GM10248 (cell line): ENCODE measurements at regions of chr4 and their contacts with region 1.

Region 1: DNA sequence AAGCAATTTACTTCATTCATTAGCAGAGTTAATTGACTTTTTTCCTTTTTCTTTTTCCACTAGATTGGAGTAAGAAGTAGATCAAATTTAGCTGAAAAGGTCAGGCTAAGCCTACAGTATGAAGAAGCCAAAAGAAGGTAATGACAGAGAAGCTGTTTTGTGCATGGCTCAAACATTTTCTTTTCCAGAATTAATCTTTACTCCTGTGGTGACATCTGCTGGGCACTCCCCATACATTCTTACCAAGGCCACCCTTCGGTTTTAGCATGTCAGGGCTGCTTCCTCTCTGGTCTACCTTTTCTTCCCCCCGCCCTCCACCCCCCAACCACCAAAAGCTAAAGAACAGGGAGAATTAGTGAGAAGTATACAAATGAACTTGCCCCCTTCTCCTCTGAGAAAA is 70.2 kb downstream of the CLDN22 start:
- DNase-seq: peak; percentile 17
- CTCF ChIP-seq: peak; percentile 20

Region 2: DNA sequence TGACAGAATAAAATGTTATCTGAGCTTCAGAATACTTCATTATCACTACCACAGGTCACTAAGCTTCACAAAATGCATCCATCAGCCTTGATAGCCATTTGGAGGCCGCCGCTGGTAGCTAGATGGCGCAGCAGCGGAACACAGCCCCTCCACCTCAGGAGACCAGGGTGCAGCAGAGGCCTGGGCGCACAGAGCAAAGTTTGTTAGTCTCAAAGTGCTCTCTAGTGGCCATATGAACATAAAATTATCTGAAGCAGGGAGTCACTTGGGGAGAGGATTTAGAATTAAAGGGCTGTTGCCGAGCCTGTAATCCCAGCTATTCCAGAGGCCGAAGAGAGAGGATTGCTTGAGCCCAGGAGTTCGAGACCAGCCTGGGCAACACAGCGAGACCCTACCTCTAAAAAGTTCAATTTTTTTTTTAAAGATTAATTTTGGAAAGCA is 324.5 kb before region 1 on chr4:
- CTCF ChIA-PET with region 1: interaction called, 11 read pairs
- POLR2A ChIA-PET with region 1: no interaction called
- DNase-seq: peak; percentile 48
- CTCF ChIP-seq: peak; percentile 90

Region 3: GRCh38 chr4:183074296-183074990 is 175.4 kb before region 1 on chr4:
- CTCF ChIA-PET with region 1: interaction called, 15 read pairs
- POLR2A ChIA-PET with region 1: no interaction called
- DNase-seq: no peak
- CTCF ChIP-seq: no peak

Region 4: DNA sequence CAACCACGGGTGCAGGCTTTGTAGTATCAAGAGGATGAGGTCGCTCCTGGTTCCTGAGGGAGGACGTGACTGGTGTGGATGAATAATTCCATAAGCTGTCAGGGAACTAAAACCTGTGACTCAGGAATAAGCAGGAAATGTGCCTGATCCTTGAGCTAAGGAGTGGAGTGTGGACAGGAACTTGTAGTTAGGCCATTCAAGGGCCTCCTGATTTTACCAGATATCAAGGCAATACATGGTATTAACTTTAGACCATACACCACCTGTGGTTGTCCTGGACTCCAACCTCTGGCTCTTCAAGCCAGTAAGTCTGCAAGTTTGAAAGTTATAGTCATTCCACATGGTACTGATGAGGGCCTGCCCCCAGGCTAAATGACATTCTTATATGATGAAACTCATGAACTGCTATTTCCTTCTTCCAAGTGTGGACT is 242.9 kb after region 1 on chr4:
- CTCF ChIA-PET with region 1: no interaction called
- POLR2A ChIA-PET with region 1: no interaction called
- DNase-seq: no peak
- CTCF ChIP-seq: no peak